ENCODE measurements at regions of chr19 and their contacts with region 1.

Region 1: DNA sequence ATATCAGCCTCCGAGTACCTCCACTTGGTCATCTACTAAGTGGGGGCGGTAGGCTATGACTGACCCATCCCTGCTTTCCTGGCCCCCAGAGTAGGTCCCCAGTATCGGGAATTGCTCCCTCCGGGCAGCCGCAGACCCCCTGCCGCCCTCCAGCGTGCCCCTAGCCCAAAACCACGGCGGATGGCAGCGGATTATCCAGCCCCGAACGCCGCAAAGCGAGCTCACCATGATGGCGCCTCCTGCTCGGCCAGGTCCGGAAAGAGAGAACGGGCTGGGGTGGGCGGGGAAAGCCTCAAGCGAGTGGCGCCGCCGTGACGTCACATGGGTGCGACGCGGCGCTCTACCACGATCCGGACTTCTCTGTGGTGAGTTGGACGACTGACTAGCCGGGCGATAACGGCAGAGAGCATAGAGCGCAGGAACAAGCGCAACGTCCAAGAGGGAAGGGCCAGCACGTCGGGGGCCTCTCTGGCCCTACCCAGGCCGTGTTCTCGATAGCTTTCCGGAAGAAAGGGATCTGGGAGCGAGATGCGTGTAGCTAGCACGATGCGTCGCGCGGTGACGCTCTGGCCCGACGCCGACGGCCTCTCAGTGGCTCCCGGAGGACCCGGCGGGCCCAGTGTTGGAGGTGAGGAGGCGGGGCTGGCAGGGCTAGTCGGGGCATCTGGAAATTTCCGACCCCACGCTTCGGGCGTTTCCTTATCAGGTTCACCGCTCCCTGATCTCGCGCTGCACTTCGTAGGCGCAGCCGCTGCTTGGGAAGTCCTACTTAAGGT is at the starts of genes RPL18 and SPHK2:
- DNase-seq: peak; percentile 94 to 97 (median 96)
- H3K4me3 ChIP-seq: peak within 1 kb of the TSS; percentile 76 to 81
- H3K4me3 Mint-ChIP-seq: peak within 1 kb of the TSS; percentile 95 to 98 (median 96)
- H3K27ac ChIP-seq: peak within 1 kb of the TSS; percentile 88
- H3K27ac Mint-ChIP-seq: peak within 1 kb of the TSS; percentile 97 to 99 (median 98)
- H3K4me1 ChIP-seq: peaks cover 50% of the 10 kb centered on the region
- H3K4me1 Mint-ChIP-seq: peaks cover 27 to 74% (median 49%) of the 10 kb centered on the region in 4 donors
- H3K27me3 ChIP-seq: no peaks in the 10 kb centered on the region
- H3K27me3 Mint-ChIP-seq: no peaks in the 10 kb centered on the region
- total RNA-seq, gene RPL18: 2,357 to 2,448 TPM
- total RNA-seq, gene SPHK2: 25.0 to 29.1 TPM

Region 2: DNA sequence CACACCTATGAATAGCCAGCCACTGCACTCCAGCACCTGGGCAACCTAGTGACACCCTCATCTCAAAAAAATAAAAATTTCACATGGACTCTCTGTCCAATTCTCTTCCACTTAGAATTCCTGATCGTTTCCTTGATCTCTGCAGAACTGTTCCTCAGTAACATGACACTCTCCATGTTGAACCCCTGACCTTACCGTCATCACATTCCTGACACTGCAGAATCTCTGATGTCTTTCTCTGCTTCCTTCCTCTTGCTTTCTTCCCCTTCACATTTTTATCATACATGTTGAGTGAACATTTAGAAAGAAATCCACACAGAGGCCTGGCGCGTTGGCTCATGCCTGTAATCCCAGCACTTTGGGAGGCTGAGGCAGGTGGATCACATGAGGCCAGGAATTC is 334.2 kb before region 1 on chr19:
- CTCF ChIA-PET with region 1: no interaction called
- POLR2A ChIA-PET with region 1: no interaction called
- intact Hi-C with region 1: no loop called
- DNase-seq: no peak
- H3K4me3 ChIP-seq: no peak overlapping the region
- H3K4me3 Mint-ChIP-seq: no peak overlapping the region
- H3K27ac ChIP-seq: no peak overlapping the region
- H3K27ac Mint-ChIP-seq: no peak overlapping the region
- H3K4me1 ChIP-seq: no peaks in the 10 kb centered on the region
- H3K4me1 Mint-ChIP-seq: no peaks in the 10 kb centered on the region
- H3K27me3 ChIP-seq: no peaks in the 10 kb centered on the region
- H3K27me3 Mint-ChIP-seq: peaks cover 7 to 15% of the 10 kb centered on the region in 2 donors

Region 3: GRCh38 chr19:48513289-48514122 is 105.6 kb before region 1 on chr19:
- CTCF ChIA-PET with region 1: no interaction called
- POLR2A ChIA-PET with region 1: interaction called, 9 read pairs
- intact Hi-C with region 1: loop called (anchors 1 kb)
- DNase-seq: peak; percentile 70 to 88 (median 73)
- H3K4me3 ChIP-seq: peak overlapping the region; percentile 65 to 89
- H3K4me3 Mint-ChIP-seq: no peak overlapping the region
- H3K27ac ChIP-seq: peak overlapping the region; percentile 59
- H3K27ac Mint-ChIP-seq: peak overlapping the region in 3 of 7 donors; percentile 68 to 96 (median 91)
- H3K4me1 ChIP-seq: peaks cover 27% of the 10 kb centered on the region
- H3K4me1 Mint-ChIP-seq: peaks cover 6 to 16% (median 11%) of the 10 kb centered on the region in 4 donors
- H3K27me3 ChIP-seq: no peaks in the 10 kb centered on the region
- H3K27me3 Mint-ChIP-seq: no peaks in the 10 kb centered on the region

Region 4: DNA sequence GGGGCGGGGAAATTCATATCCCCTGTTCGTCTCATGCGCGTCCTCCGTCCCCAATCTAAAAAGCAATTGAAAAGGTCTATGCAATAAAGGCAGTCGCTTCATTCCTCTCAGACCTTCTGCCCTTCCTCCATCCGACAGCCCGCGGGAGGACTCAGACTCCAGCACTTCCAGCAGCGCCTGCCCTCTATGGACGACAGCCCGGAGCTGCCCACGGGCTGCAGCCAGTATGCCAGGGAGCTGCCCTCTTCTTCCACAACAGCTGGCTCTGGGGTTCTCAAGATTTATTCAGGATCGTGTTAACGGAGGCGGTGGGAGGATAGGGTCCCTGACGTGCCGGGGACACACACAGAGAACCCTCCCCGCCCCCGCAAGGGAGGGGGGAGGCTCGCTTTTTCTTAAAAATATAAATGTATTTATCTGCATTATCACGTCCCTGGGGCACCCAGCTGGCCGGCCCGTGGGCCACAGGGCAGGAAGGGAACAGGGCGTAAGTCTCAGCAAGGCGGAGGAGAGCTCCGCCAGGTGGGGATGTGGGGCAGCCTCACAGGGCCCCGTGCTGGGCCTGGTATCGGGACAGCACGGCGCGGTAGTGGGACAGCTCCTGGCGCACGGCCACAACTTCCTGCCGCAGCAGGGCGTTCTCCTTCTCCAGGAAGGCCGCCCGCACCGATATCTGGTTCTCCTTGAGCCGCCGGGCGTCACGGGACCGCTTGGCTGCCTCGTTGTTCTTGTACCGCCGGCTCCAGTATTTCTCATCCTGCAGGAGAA is 11.4 kb after region 1 on chr19:
- CTCF ChIA-PET with region 1: interaction called, 3 read pairs
- POLR2A ChIA-PET with region 1: interaction called, 61 read pairs
- intact Hi-C with region 1: no loop called
- DNase-seq: peak in 1 of 5 donors; percentile 5
- H3K4me3 ChIP-seq: no peak overlapping the region
- H3K4me3 Mint-ChIP-seq: no peak overlapping the region
- H3K27ac ChIP-seq: no peak overlapping the region
- H3K27ac Mint-ChIP-seq: peak overlapping the region in 3 of 7 donors; percentile 12 to 72 (median 59)
- H3K4me1 ChIP-seq: peaks cover 28% of the 10 kb centered on the region
- H3K4me1 Mint-ChIP-seq: peaks cover 4 to 45% (median 18%) of the 10 kb centered on the region in 4 donors
- H3K27me3 ChIP-seq: no peaks in the 10 kb centered on the region
- H3K27me3 Mint-ChIP-seq: no peaks in the 10 kb centered on the region

Region 5: GRCh38 chr19:48713864-48714758 is 95.0 kb after region 1 on chr19:
- CTCF ChIA-PET with region 1: no interaction called
- POLR2A ChIA-PET with region 1: interaction called, 3 read pairs
- intact Hi-C with region 1: loop called (anchors 5 kb)
- DNase-seq: peak; percentile 96 to 99 (median 97)
- H3K4me3 ChIP-seq: peak overlapping the region; percentile 63 to 73
- H3K4me3 Mint-ChIP-seq: peak overlapping the region; percentile 83 to 94 (median 90)
- H3K27ac ChIP-seq: peak overlapping the region; percentile 70
- H3K27ac Mint-ChIP-seq: peak overlapping the region; percentile 57 to 95 (median 92)
- H3K4me1 ChIP-seq: peaks cover 24% of the 10 kb centered on the region
- H3K4me1 Mint-ChIP-seq: peaks cover 4 to 34% (median 15%) of the 10 kb centered on the region in 4 donors
- H3K27me3 ChIP-seq: no peaks in the 10 kb centered on the region
- H3K27me3 Mint-ChIP-seq: no peaks in the 10 kb centered on the region

Measured in CD4-positive, alpha-beta memory T cell (primary cell).